ENCODE measurements at regions of chr7 and their contacts with region 1.

Region 1: DNA sequence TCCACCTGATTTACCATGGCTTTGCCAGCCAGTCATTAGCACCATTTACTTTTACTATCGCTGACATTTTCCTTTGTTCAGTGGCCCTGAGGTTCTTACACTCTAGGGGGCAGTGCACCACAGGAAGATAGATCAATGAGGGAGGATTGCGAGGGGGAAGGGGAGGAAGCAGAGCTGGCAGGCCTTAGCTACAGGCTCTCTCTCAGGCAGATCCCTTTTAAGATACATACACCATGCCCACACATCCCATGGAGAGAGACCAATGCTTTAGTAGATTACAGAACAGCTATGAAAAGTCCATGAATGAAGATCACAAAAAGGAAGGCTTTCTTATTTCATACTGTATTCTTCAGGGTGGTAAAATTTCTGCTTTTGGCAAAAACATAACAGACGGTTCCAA is 47.4 kb downstream of the DENND11 start:
- H3K4me3 Mint-ChIP-seq: no peak overlapping the region
- H3K27ac Mint-ChIP-seq: peak overlapping the region; percentile 41
- H3K4me1 Mint-ChIP-seq: peaks cover 15% of the 10 kb centered on the region
- H3K27me3 Mint-ChIP-seq: no peaks in the 10 kb centered on the region

Region 2: GRCh38 chr7:141737834-141738591 is 83.5 kb after region 1 on chr7 and contains the start of gene SSBP1:
- intact Hi-C with region 1: loop called (anchors 1 kb)
- H3K4me3 Mint-ChIP-seq: peak within 1 kb of the TSS; percentile 98
- H3K27ac Mint-ChIP-seq: peak within 1 kb of the TSS; percentile 97
- H3K4me1 Mint-ChIP-seq: peaks cover 29% of the 10 kb centered on the region
- H3K27me3 Mint-ChIP-seq: no peaks in the 10 kb centered on the region

Region 3: DNA sequence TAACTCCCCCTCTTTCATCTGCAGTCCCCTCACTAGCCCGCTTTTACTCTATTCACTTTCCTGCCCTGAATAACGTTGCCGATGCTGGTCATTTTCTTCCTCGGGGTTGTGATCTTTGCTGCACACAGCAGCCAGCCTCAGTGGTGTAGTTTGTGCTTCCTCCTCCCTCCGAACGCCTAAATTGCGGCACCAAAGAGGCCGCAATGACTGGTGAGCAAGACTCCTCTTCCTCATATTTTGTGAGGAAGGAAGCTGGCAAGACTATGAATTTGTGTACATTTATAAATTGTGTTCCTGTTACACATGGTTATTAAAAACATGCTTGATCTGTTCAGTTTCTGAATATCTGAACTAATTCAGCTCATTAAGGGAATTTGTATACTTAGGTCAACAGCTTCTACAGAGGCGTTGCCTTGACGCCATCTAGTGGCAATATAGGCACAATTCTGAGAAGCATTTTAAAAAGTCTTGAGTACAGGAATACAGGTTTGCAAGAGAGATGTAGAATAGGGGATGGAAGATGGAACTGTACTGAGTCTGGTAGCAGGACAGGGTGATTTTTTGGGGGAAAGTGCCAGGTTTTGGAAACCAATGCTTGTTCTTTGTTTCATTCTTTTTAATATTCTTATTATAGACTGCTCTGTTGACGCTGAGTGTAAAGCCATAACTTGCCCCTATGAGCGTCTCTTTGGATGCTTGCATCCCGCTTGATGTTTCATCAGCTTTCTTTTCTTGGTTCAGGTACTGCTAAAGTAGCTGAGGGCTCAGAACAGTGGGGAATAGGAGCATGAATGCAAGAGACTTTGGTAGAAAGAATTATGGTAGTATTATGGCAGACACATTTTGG is 131.4 kb after region 1 on chr7:
- intact Hi-C with region 1: loop called (anchors 5 kb)
- H3K4me3 Mint-ChIP-seq: no peak overlapping the region
- H3K27ac Mint-ChIP-seq: no peak overlapping the region
- H3K4me1 Mint-ChIP-seq: peaks cover 7% of the 10 kb centered on the region
- H3K27me3 Mint-ChIP-seq: no peaks in the 10 kb centered on the region

Region 4: DNA sequence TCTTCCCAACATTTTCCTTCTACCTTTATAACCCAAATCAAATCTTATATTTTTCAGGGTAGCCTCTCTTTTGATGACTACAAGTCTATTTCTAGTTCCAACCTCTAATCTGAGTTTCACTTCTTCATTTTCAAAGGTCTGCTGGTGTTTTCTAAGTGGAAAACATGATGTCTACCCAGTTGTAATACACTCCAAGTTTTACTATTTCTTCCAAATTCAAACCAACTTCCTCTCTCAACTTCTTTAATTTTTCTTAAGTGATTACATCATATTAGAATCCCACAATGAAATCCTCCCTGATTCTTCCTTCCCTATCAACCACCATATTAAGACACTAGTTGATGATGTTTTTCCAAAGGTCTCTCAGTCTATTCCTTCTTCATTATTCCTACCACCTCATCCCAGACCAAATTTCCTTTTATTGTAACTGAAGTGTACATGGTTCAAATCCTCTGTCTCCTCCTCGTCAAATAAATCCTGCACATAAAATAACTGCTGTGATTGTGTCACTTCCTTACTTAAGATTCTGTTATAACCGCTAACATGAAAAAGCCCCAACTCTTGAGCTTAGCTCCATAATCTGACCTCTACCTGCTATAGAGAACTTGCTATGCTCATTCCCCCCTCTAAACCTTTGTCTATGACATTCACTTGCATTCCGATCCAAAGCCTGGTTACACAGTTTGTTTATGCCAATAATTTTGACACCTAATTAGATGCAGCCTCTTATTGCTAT is 306.3 kb after region 1 on chr7:
- intact Hi-C with region 1: loop called (anchors 10 kb)
- H3K4me3 Mint-ChIP-seq: peak overlapping the region; percentile 2
- H3K27ac Mint-ChIP-seq: peak overlapping the region; percentile 75
- H3K4me1 Mint-ChIP-seq: peaks cover 19% of the 10 kb centered on the region
- H3K27me3 Mint-ChIP-seq: no peaks in the 10 kb centered on the region

Region 5: GRCh38 chr7:142188846-142189245 is 534.3 kb after region 1 on chr7:
- intact Hi-C with region 1: loop called (anchors 10 kb)
- H3K4me3 Mint-ChIP-seq: no peak overlapping the region
- H3K27ac Mint-ChIP-seq: no peak overlapping the region
- H3K4me1 Mint-ChIP-seq: peaks cover 19% of the 10 kb centered on the region
- H3K27me3 Mint-ChIP-seq: peaks cover 14% of the 10 kb centered on the region

Measured in dendritic cell treated with granulocyte-macrophage colony-stimulating factor and Interleukin-4, amounts not matched to agents 40 ng/mL and 50 ng/mL, for 4 days (primary cell).